ENCODE measurements at regions of chr5 and their contacts with region 1.

Region 1: GRCh38 chr5:168047043-168047668 is 244.3 kb upstream of the WWC1 start:
- DNase-seq: peak; percentile 61 to 68
- ATAC-seq: peak; percentile 91 to 96
- H3K4me3 ChIP-seq: no peak overlapping the region
- H3K27ac ChIP-seq: no peak overlapping the region
- H3K4me1 ChIP-seq: 0 out of 3 replicates have a peak, but pooled peaks cover 4% of the 10 kb centered on the region
- CTCF ChIP-seq: peak; percentile 78
- EP300 ChIP-seq: no peak
- POLR2A ChIP-seq: no peak
- RAD21 ChIP-seq: peak; percentile 89

Region 2: GRCh38 chr5:167582283-167582682 is 464.9 kb before region 1 on chr5:
- CTCF ChIA-PET with region 1: interaction called, 43 read pairs
- POLR2A ChIA-PET with region 1: no interaction called
- DNase-seq: peak; percentile 24 to 31
- ATAC-seq: peak; percentile 81 to 85; a peak in 4 of 6 replicates
- H3K4me3 ChIP-seq: no peak overlapping the region
- H3K27ac ChIP-seq: no peak overlapping the region
- H3K4me1 ChIP-seq: peaks cover 6% of the 10 kb centered on the region; the same call in 1 of the 3 replicates
- CTCF ChIP-seq: peak; percentile 71
- EP300 ChIP-seq: no peak
- POLR2A ChIP-seq: no peak
- RAD21 ChIP-seq: peak; percentile 82 to 88

Region 3: DNA sequence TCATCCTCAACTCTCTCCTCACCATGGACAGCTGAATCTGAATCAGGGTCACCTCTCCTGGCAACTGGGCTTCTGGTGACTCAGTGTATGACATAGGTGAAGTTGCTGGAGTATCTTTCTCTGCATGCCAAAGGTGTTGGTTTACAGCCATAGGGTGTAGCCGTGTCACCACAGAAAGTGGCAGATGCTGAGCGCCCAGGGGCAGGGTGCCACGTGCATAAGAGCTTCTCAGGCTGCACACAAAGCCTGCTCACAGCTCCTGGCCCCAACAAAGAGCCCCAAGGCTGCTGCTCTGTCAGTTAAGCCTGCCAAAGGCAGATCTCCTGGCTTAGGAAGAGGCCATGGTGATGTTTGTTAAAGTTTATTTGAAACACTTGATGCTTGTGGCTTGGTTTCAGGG is 53.4 kb before region 1 on chr5:
- CTCF ChIA-PET with region 1: no interaction called
- POLR2A ChIA-PET with region 1: no interaction called
- DNase-seq: no peak
- ATAC-seq: no peak
- H3K4me3 ChIP-seq: no peak overlapping the region
- H3K27ac ChIP-seq: no peak overlapping the region
- H3K4me1 ChIP-seq: no peaks in the 10 kb centered on the region
- CTCF ChIP-seq: no peak
- EP300 ChIP-seq: no peak
- POLR2A ChIP-seq: no peak
- RAD21 ChIP-seq: no peak

Region 4: GRCh38 chr5:168027007-168027406 is 20.1 kb before region 1 on chr5:
- CTCF ChIA-PET with region 1: interaction called, 24 read pairs
- POLR2A ChIA-PET with region 1: no interaction called
- DNase-seq: no peak
- ATAC-seq: no peak
- H3K4me3 ChIP-seq: no peak overlapping the region
- H3K27ac ChIP-seq: no peak overlapping the region
- H3K4me1 ChIP-seq: no peaks in the 10 kb centered on the region
- CTCF ChIP-seq: no peak
- EP300 ChIP-seq: no peak
- POLR2A ChIP-seq: no peak
- RAD21 ChIP-seq: no peak

Region 5: GRCh38 chr5:168064933-168065622 is 17.9 kb after region 1 on chr5:
- CTCF ChIA-PET with region 1: interaction called, 10 read pairs
- POLR2A ChIA-PET with region 1: no interaction called
- DNase-seq: no peak
- ATAC-seq: no peak
- H3K4me3 ChIP-seq: no peak overlapping the region
- H3K27ac ChIP-seq: no peak overlapping the region
- H3K4me1 ChIP-seq: no peaks in the 10 kb centered on the region
- CTCF ChIP-seq: no peak
- EP300 ChIP-seq: no peak
- POLR2A ChIP-seq: no peak
- RAD21 ChIP-seq: no peak